Ascending aorta (tissue), 2 donors: ENCODE measurements at regions of chr5 and their contacts with region 1.

Region 1: GRCh38 chr5:168020542-168021294 is 270.7 kb upstream of the WWC1 start:
- DNase-seq: no peak
- H3K4me3 ChIP-seq: no peak overlapping the region
- H3K27ac ChIP-seq: no peak overlapping the region
- H3K4me1 ChIP-seq: no peaks in the 10 kb centered on the region
- H3K27me3 ChIP-seq: no peaks in the 10 kb centered on the region
- CTCF ChIP-seq: peak in 1 of 3 experiments; percentile 49

Region 2: DNA sequence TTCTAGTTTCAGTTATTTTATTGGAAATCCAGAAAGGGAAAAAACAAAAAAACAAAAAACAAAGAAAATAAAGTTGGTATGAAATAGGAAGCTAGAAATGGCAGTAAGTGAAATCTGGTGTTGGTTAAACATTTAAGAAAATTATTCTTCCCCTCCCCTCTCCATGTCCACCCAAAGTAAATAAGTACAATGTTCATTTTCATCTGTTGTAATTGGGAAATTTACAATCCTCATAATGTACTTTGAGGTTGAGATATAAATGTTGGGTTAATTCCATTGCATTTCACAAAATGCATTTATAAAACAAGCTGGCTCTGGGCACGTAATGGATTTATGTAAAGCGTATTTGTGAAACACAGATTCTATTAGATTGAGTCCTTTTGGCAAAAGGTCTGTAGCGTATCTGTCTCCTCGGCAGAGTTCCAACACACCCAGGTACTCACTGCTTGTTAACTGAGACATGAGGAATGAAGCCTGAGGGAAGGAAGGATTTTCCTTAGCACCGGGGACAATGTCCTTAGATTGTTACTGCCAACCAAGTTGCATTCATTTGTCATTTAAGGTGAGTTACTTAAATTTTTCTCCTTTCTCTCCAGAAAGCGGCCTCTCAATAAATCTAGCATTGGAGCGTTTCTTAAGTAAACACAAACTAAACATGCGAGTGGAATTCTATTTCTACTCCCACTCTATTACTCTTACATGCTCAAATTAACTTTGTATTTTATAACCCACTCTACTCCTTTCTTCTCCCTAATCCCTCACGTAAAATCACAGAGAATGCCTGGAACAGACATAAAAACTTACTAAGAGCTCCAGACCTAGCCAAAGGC is 641.6 kb before region 1 on chr5:
- intact Hi-C with region 1: no loop called
- DNase-seq: no peak
- H3K4me3 ChIP-seq: no peak overlapping the region
- H3K27ac ChIP-seq: no peak overlapping the region
- H3K4me1 ChIP-seq: no peaks in the 10 kb centered on the region
- H3K27me3 ChIP-seq: no peaks in the 10 kb centered on the region
- CTCF ChIP-seq: no peak

Region 3: DNA sequence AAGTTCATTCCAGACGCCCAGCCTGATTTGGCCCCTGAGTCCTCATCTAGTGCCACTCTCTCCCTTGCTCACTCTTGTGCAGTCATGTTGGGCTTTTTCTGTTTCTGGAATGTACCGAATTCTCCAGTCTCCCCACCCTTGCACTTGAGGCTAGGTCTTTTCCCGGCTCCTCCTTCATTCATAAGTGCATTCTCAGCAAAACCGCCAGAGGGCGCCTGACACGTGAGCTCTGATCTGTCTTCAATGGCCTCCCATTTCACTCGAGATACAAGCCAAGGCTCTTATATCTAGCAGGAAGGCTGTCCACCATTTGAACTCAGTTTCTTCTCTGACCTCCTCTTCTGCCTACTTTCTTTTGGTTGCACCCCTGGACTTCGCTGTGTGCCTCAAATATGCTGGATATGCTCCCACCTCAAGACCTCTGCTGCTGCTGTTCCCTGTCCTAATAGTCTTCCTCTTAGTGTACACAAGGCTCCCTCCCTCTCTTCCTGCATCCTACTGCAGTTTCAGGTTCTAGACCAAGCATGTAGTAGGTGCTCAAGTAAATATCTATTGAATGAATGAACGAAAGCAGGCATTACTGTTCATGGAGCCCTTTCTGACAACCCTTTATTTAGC is 297.4 kb before region 1 on chr5:
- intact Hi-C with region 1: loop called (anchors 2 kb)
- DNase-seq: peak in 1 of 2 donors; percentile 81
- H3K4me3 ChIP-seq: no peak overlapping the region
- H3K27ac ChIP-seq: no peak overlapping the region
- H3K4me1 ChIP-seq: no peaks in the 10 kb centered on the region
- H3K27me3 ChIP-seq: no peaks in the 10 kb centered on the region
- CTCF ChIP-seq: peak; percentile 62 to 91 (median 71)

Region 4: DNA sequence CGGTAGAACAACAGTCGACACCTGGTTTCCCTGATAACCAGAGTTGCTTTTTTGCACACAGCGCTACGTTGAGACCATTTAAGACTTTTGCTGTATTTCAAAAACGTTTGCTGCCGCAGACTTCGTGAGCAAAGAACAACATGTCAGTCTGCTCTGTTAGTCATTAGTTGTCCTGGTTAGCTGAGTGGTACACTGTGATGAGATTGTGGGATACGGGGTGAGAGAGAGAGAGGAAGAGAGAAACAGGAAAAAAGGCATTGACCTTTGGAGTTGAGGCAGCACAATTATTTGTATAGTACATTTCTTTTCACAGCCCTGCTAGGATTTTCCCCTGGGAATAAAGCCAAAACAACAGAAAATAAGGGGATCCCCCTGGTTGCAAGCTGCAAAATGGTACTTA is 35.3 kb before region 1 on chr5:
- intact Hi-C with region 1: no loop called
- DNase-seq: no peak
- H3K4me3 ChIP-seq: no peak overlapping the region
- H3K27ac ChIP-seq: no peak overlapping the region
- H3K4me1 ChIP-seq: no peaks in the 10 kb centered on the region
- H3K27me3 ChIP-seq: no peaks in the 10 kb centered on the region
- CTCF ChIP-seq: no peak

Region 5: GRCh38 chr5:168093200-168093910 is 72.6 kb after region 1 on chr5:
- intact Hi-C with region 1: no loop called
- DNase-seq: no peak
- H3K4me3 ChIP-seq: no peak overlapping the region
- H3K27ac ChIP-seq: no peak overlapping the region
- H3K4me1 ChIP-seq: no peaks in the 10 kb centered on the region
- H3K27me3 ChIP-seq: no peaks in the 10 kb centered on the region
- CTCF ChIP-seq: no peak